Calu3 (cell line): ENCODE measurements at regions of chr2 and their contacts with region 1.

Region 1: DNA sequence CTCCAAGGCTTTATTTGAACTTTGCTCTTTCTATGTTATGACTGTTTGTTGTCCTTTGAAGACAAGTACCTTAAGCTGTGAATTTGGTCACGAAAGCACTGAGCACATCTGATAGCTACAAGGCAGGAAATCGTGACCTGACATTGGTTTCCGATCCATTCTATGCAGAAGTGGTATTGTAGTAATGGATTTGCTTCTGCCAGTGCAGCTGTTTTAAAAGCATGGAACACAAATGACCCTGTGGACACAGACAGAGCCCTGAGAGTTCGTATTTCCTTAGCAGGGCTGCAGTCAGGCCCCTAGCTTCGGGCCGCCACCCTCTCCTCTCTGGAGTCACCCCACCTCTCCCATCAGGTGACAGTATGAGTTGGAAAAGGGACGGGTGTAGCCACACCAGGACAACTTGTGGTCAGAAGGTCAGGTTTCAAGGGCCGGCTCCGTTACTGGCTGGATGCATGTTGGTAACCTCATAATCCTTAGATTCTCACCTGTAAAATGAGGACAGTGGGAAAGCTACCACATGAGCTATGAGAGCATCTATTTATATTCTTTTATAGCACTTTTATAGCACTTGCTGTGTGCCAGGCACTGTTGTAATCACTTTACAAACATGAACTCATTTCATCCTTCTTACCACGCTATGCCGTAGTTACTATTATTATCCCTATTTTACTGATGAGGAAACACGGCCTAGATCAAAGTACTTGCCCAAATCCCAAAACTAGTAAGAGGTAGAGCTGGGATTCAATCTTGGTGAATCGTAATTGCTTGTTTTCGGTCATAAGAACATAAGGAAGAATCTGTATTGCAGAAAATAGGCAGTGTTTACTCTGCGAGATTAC is 70.2 kb downstream of the SPATS2L start:
- DNase-seq: no peak
- H3K4me3 Mint-ChIP-seq: peak overlapping the region; percentile 79
- H3K27ac Mint-ChIP-seq: peak overlapping the region; percentile 93
- H3K4me1 Mint-ChIP-seq: peaks cover 88% of the 10 kb centered on the region
- H3K27me3 Mint-ChIP-seq: no peaks in the 10 kb centered on the region
- CTCF ChIP-seq: no peak

Region 2: GRCh38 chr2:200054681-200055468 is 321.9 kb before region 1 on chr2:
- CTCF ChIA-PET with region 1: no interaction called
- intact Hi-C with region 1: no loop called
- DNase-seq: no peak
- H3K4me3 Mint-ChIP-seq: no peak overlapping the region
- H3K27ac Mint-ChIP-seq: no peak overlapping the region
- H3K4me1 Mint-ChIP-seq: peaks cover 31% of the 10 kb centered on the region
- H3K27me3 Mint-ChIP-seq: no peaks in the 10 kb centered on the region
- CTCF ChIP-seq: no peak

Region 3: DNA sequence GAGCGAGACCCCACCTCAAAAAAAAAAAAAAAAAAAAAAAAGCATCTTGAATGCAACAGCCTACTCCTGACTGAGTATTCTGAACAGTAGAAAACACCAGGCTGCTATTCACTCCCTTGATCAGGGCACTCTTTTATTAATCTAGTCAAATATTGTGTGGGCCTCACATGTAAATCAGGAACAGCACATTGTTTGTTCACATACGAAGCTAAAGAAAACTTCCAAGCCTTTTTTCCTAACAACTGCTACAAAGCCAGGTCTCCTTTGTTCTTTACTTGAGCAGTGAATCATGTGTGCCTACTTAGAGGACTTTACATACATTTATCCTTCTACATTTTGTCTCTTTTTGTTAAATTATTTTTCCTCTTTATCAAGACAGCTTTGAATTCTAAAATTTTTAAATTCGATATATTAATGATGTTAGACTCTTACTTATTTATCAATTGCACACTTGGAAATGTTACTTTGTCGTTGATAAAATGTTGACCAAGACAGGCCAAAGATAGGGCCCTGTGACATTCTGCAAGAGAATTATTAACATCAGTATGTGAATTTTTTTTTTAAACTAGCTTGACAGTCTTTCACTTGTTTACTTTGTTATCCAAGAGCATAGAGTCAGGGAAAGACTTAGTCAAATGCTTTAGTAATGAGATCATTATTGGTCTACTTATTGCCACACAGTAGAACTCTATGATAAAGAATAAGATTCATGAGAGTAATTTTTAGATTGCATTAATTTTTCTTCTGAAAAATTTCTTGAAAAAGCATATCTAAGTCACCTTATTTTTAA is 57.0 kb before region 1 on chr2:
- CTCF ChIA-PET with region 1: interaction called, 3 read pairs
- intact Hi-C with region 1: loop called (anchors 2 kb)
- DNase-seq: no peak
- H3K4me3 Mint-ChIP-seq: no peak overlapping the region
- H3K27ac Mint-ChIP-seq: peak overlapping the region; percentile 60
- H3K4me1 Mint-ChIP-seq: peaks cover 84% of the 10 kb centered on the region
- H3K27me3 Mint-ChIP-seq: no peaks in the 10 kb centered on the region
- CTCF ChIP-seq: no peak

Region 4: DNA sequence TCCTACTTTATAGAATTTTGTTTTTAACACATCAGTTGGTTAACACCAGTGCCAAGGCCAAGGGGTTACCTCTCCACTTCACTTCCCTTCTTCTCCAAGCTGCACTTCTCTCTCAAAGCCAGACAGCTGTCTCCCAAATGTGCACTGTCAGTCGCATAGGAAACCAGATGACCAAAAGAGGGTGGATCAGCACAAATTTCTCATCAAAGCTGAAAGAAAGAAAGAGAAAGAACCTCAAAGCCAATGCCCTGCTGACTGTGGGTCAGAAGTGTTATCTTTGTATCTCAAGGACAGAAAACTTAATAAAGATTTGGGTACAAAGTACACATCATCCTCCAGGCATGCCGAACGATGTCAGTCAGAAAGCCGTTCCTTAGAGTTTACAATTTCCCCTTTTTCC is 38.0 kb before region 1 on chr2:
- CTCF ChIA-PET with region 1: no interaction called
- intact Hi-C with region 1: loop called (anchors 5 kb)
- DNase-seq: no peak
- H3K4me3 Mint-ChIP-seq: no peak overlapping the region
- H3K27ac Mint-ChIP-seq: no peak overlapping the region
- H3K4me1 Mint-ChIP-seq: peaks cover 70% of the 10 kb centered on the region
- H3K27me3 Mint-ChIP-seq: no peaks in the 10 kb centered on the region
- CTCF ChIP-seq: no peak

Region 5: DNA sequence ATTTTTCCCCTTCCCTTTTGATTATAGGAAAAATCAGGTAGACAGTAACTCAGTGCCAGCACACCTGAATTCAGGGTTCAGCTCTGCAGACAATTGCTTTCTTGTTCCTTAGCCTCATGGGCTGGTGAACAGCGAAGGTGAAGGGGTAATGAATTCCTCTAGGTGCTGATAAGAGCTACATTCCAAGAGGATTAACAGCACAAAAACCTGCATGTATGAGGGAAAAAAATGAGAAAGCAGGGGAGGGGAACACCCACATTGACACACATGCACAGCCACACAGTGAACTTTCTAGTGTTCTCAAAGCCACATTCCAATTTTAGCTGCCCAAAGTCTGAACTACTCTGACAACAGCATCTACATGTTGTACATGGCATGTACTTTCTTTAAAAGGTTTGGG is 24.1 kb before region 1 on chr2:
- CTCF ChIA-PET with region 1: interaction called, 4 read pairs
- intact Hi-C with region 1: loop called (anchors 2 kb)
- DNase-seq: peak; percentile 64
- H3K4me3 Mint-ChIP-seq: peak overlapping the region; percentile 59
- H3K27ac Mint-ChIP-seq: peak overlapping the region; percentile 96
- H3K4me1 Mint-ChIP-seq: peaks cover 98% of the 10 kb centered on the region
- H3K27me3 Mint-ChIP-seq: no peaks in the 10 kb centered on the region
- CTCF ChIP-seq: no peak

Region 6: DNA sequence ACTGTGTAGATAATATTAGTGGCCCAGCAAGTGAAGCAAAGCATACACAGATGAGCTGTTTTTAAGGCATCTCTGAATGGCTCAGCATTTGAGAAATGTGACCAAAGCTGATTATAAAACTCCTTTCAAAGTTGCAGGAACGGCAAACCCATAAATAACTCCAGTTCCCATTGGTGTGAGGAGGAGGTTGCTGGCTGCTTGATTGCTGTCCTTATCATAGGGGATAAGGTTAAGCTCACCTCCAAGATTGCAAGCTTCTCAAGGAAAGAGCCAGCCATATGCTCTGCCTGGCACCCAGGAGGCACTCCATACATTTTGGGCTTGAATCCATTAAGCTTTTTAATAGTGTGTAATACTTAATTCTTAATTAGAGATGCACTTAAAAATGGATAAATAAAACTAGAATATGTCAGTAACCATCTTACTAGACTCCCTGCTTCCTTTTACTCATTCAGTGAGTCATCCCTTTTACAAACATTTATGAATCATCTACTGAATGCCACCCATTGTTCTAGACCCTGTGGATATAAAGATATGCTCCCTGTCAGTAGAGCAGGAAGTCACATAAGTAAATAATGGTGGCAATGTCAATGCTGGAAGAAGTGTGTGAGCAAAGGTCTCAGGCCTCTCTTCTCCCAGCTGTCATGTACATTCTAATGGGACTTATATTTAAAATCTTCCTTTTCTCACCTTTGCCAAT is 29.0 kb after region 1 on chr2:
- CTCF ChIA-PET with region 1: interaction called, 6 read pairs
- intact Hi-C with region 1: loop called (anchors 2 kb)
- DNase-seq: peak; percentile 58
- H3K4me3 Mint-ChIP-seq: peak overlapping the region; percentile 61
- H3K27ac Mint-ChIP-seq: peak overlapping the region; percentile 85
- H3K4me1 Mint-ChIP-seq: peaks cover 87% of the 10 kb centered on the region
- H3K27me3 Mint-ChIP-seq: no peaks in the 10 kb centered on the region
- CTCF ChIP-seq: no peak